ENCODE measurements at regions of chr14 and their contacts with region 1.

Region 1: DNA sequence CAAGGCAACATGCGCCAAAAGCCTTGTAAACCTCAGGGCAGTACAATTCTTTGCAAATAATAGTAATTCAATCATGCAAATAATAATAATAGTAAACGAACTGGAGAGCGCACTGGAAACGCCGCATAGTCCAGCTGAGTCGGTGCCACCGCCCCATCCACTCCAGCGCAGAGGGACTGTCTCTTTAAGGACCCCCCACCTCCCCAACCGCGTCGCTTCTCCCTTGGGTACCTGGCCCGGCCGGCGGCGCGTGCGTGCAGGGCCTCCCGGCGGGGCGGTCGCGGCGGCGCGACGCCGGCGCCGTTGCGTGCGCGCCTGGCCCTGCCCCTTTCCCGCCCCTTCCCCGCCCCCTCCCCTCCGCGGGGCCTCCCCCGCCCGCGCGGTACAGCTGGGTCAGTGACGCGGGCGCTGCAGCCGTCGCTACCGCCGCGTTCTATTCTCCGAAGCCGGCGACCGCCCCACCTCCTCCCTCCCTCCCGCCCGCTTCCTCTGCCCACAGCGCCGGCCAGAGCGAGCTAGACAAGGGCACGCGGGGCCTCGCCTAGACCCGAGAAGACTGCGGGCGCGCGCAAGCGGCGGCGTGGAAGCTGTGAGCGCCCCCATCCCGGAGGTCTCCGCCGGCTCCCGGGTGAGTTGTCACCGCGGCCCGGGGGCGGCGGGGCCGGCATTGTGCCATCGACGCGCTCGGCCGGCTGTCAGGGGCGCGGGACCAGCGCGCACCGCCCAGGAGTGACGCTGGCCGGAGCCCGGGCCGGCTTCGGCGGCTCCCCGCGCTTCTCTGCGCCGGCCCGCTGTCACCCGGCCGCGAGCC is at the start of gene SUSD6:
- DNase-seq: peak; percentile 90
- H3K4me3 Mint-ChIP-seq: peak within 1 kb of the TSS; percentile 91
- H3K27ac Mint-ChIP-seq: peak within 1 kb of the TSS; percentile 93
- H3K4me1 Mint-ChIP-seq: peaks cover 53% of the 10 kb centered on the region
- H3K27me3 Mint-ChIP-seq: no peaks in the 10 kb centered on the region
- CTCF ChIP-seq: no peak
- total RNA-seq, gene SUSD6: 27.7 and 32.1 TPM in 2 replicates

Region 2: DNA sequence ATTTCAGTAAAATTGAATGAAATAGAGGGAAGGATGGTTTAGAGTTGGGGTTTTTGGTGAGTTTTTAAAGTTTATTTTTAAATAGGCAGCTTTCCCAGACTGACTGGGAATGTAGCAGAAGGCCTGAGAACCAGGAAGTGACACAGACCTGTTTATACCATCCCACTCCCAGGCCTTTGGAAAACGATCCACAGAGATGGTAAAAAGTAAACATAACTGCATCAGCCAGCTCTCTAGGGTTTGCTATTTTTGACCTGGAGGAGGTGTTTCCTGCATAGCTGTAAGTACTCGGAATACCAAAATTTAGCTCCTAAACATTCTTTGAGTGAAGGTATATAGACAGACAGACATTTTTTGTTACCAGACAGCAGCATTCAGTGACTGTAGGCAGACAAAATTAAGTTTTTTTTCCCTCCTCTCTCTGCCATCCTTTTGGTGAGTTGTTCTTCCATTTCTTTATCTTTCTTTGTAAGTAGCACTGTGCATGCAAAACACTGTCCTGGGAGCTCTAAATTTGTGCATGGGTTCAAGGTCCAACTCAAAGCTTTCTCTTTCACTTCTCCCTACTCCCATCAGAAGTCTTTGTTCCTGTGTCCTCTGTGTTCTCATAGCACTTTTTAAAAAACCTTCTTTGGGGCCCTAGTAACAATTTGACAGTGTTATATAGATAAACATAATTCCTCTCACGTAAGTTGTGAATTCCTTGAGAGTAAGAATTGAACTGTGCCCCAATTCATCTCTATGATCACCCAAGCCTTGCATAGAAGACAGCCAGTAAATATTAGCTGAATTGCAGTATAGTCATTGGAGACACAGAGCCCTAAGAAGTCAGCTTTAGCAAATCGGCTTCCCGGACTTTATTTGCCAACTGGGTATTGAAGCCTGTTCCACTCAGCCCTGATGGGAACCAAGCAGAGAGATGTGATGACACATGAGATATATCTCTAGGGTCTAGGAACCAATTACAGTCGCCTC is 37.4 kb after region 1 on chr14:
- CTCF ChIA-PET with region 1: interaction called, 6 read pairs
- POLR2A ChIA-PET with region 1: interaction called, 27 read pairs
- intact Hi-C with region 1: no loop called
- DNase-seq: peak; percentile 49
- H3K4me3 Mint-ChIP-seq: peak overlapping the region; percentile 15
- H3K27ac Mint-ChIP-seq: peak overlapping the region; percentile 65
- H3K4me1 Mint-ChIP-seq: peaks cover 66% of the 10 kb centered on the region
- H3K27me3 Mint-ChIP-seq: no peaks in the 10 kb centered on the region
- CTCF ChIP-seq: no peak

Region 3: DNA sequence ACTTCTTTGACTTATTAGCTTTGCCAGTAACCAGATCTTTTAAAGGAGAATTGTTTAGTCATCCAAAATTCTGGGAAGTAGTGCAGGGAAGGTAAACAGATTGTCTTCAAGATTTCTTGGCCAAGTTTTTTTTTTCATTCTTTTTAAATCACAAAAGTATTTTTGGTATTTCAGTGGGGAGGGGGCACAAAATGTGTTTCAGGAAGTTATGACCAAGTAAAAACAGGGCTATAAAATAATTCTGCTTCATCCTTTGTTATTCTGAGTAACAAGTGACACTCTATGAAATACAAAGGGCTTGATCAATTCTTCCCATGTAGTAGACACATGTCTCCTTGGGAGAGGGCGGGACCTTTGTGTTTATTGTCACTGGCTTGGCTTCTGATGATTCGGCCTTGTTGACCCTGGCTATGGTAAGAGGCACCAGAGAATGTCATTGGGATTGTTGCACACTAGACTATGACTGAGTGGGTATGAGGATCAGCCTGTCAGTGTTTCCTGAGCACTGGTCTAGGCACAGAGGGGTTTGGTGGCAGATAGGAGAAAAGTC is 55.4 kb after region 1 on chr14:
- CTCF ChIA-PET with region 1: interaction called, 3 read pairs
- POLR2A ChIA-PET with region 1: interaction called, 25 read pairs
- intact Hi-C with region 1: no loop called
- DNase-seq: no peak
- H3K4me3 Mint-ChIP-seq: no peak overlapping the region
- H3K27ac Mint-ChIP-seq: peak overlapping the region; percentile 61
- H3K4me1 Mint-ChIP-seq: peaks cover 40% of the 10 kb centered on the region
- H3K27me3 Mint-ChIP-seq: no peaks in the 10 kb centered on the region
- CTCF ChIP-seq: no peak

Region 4: DNA sequence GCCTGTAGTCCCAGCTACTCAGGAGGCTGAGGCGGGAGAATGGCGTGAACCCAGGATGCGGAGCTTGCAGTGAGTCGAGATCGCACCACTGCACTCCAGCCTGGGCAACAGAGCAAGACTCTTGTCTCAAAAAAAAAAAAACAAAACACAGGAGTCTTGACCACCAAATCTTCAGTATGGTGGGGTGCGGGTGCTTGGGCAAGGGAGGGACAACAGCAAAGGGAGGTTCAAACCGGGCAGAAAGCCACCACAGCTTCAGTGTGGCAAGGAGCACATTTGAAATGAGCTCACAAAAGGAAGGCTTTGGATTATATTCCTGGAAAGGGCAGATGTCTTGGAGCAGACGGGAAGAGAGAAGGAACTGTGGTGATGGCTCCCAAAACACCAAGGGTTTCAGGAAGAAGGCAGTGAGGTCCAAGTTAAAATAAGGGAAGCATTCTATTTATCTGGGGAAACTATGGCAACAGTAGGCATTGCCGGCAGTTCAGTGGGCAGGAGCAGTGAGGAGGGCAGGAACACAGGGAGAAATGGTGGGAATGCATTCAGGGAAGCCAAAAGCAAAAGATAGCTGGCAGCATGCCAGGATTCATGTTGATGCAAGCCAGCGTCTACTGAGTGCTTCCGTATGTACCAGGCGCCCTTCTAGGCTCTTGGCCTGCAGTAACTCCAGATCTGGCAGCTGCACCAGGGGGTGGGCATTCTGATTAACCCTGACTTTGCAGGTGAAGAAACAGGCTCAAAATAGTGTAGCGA is 104.5 kb after region 1 on chr14:
- CTCF ChIA-PET with region 1: interaction called, 7 read pairs
- POLR2A ChIA-PET with region 1: interaction called, 54 read pairs
- intact Hi-C with region 1: loop called (anchors 1 kb)
- DNase-seq: peak; percentile 98
- H3K4me3 Mint-ChIP-seq: peak overlapping the region; percentile 21
- H3K27ac Mint-ChIP-seq: peak overlapping the region; percentile 61
- H3K4me1 Mint-ChIP-seq: peaks cover 48% of the 10 kb centered on the region
- H3K27me3 Mint-ChIP-seq: no peaks in the 10 kb centered on the region
- CTCF ChIP-seq: no peak

Region 5: GRCh38 chr14:69766984-69767368 is 155.6 kb after region 1 on chr14 and contains the start of gene SRSF5:
- CTCF ChIA-PET with region 1: no interaction called
- POLR2A ChIA-PET with region 1: interaction called, 39 read pairs
- intact Hi-C with region 1: no loop called
- DNase-seq: peak; percentile 97
- H3K4me3 Mint-ChIP-seq: peak within 1 kb of the TSS; percentile 92
- H3K27ac Mint-ChIP-seq: peak within 1 kb of the TSS; percentile 100
- H3K4me1 Mint-ChIP-seq: peaks cover 14% of the 10 kb centered on the region
- H3K27me3 Mint-ChIP-seq: no peaks in the 10 kb centered on the region
- CTCF ChIP-seq: no peak
- total RNA-seq, gene SRSF5: 281 and 316 TPM in 2 replicates

Region 6: DNA sequence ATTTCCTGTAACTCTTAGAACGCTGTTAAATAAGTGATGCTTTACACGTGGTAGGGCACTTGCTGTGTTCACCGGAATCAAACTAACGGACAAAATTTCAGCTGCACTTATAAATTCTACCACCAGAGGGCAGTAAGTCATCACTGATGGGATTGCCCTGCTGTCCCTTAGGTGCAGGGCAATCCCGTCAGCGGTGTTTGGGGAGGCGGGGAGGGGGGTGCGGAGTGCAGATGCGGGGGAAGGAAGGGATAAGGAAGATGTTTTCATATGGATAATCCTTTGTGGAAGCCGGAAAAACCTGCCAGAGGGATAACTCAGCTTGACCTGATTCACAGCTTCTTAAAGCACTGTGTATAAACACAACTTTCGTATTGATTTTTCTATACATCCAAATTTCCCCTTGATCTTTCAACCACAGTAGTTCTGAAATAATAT is 207.4 kb after region 1 on chr14:
- CTCF ChIA-PET with region 1: no interaction called
- POLR2A ChIA-PET with region 1: no interaction called
- intact Hi-C with region 1: no loop called
- DNase-seq: peak; percentile 74
- H3K4me3 Mint-ChIP-seq: no peak overlapping the region
- H3K27ac Mint-ChIP-seq: no peak overlapping the region
- H3K4me1 Mint-ChIP-seq: no peaks in the 10 kb centered on the region
- H3K27me3 Mint-ChIP-seq: no peaks in the 10 kb centered on the region
- CTCF ChIP-seq: peak; percentile 82

Measured in MCF 10A (cell line).